ENCODE measurements at regions of chr18 and their contacts with region 1.

Region 1: DNA sequence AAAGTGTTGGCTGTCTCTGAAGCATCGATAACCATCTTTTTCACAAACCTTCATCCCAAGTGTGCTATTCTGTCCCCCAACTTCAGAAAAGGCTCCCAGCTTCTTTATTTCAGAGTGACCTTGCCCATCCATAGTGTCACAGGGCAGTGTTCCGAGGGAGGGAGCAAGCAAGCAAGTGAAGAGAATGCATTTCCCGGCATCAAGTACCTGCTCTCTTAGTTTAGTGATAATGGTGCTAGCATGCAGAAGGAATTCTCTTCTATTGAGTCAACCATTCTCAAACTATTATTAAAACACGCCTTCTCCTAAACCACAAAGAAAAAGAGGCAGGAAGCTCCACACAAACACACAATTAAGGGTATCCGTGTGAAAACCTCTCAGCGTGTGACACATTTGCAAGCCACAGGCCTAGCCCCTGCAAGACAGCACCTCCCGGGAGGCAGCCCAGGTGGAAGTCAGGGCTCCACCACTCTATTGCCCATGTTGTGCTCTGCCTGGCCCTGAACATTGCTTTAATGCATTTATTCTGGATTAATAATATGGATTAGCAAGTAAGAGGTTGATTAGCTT is 504.9 kb downstream of the GALR1 start:
- DNase-seq: no peak
- ATAC-seq: no peak
- H3K4me3 ChIP-seq: no peak overlapping the region
- H3K27ac ChIP-seq: no peak overlapping the region
- H3K4me1 ChIP-seq: no peaks in the 10 kb centered on the region
- H3K27me3 ChIP-seq: peaks cover 32% of the 10 kb centered on the region
- CTCF ChIP-seq: no peak

Region 2: GRCh38 chr18:77784759-77785379 is 30.3 kb after region 1 on chr18:
- CTCF ChIA-PET with region 1: no interaction called
- POLR2A ChIA-PET with region 1: no interaction called
- in situ Hi-C with region 1: no loop called
- intact Hi-C with region 1: loop called (anchors 1 kb)
- DNase-seq: no peak
- ATAC-seq: no peak
- H3K4me3 ChIP-seq: no peak overlapping the region
- H3K27ac ChIP-seq: no peak overlapping the region
- H3K4me1 ChIP-seq: no peaks in the 10 kb centered on the region
- H3K27me3 ChIP-seq: peaks cover 24% of the 10 kb centered on the region
- CTCF ChIP-seq: no peak

Measured in Panc1 (cell line).